ENCODE measurements at regions of chr17 and their contacts with region 1.

Region 1: DNA sequence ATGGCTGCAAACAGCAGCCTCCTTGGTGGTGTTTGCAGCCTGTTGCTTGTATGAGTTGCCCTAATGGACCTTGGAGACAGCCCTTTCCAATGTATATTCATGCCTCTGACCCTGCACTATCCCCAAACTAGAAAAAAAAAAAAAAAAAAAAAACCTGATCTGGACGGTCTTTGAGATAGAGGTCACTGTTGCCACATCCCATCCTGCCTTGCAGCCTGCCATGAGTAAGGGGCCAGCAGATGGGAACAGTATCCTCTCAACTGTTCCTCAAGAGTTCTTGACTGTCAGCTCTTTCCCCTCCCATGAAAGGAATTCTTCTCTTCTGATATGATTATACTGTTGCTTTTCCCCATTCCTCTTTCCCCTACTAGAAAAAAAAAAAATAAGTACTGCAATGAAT is 152.4 kb downstream of the SSH2 start:
- DNase-seq: no peak
- ATAC-seq: no peak
- H3K4me3 ChIP-seq: no peak overlapping the region
- H3K4me3 Mint-ChIP-seq: no peak overlapping the region
- H3K27ac ChIP-seq: no peak overlapping the region
- H3K27ac Mint-ChIP-seq: no peak overlapping the region
- H3K4me1 ChIP-seq: peaks cover 7% of the 10 kb centered on the region
- H3K4me1 Mint-ChIP-seq: peaks cover 7% of the 10 kb centered on the region
- H3K27me3 ChIP-seq: no peaks in the 10 kb centered on the region
- H3K27me3 Mint-ChIP-seq: no peaks in the 10 kb centered on the region
- CTCF ChIP-seq: no peak

Region 2: GRCh38 chr17:29579866-29580771 is 197.5 kb before region 1 on chr17:
- CTCF ChIA-PET with region 1: interaction called, 21 read pairs
- POLR2A ChIA-PET with region 1: interaction called, 3 read pairs
- intact Hi-C with region 1: loop called (anchors 1 kb)
- DNase-seq: peak; percentile 81 to 95 (median 92)
- ATAC-seq: peak; percentile 99
- H3K4me3 ChIP-seq: no peak overlapping the region
- H3K4me3 Mint-ChIP-seq: no peak overlapping the region
- H3K27ac ChIP-seq: no peak overlapping the region
- H3K27ac Mint-ChIP-seq: peak overlapping the region; percentile 34
- H3K4me1 ChIP-seq: peaks cover 13% of the 10 kb centered on the region
- H3K4me1 Mint-ChIP-seq: peaks cover 11% of the 10 kb centered on the region
- H3K27me3 ChIP-seq: no peaks in the 10 kb centered on the region
- H3K27me3 Mint-ChIP-seq: no peaks in the 10 kb centered on the region
- CTCF ChIP-seq: peak; percentile 80

Region 3: GRCh38 chr17:29640413-29640812 is 137.2 kb before region 1 on chr17:
- CTCF ChIA-PET with region 1: interaction called, 23 read pairs
- POLR2A ChIA-PET with region 1: interaction called, 4 read pairs
- intact Hi-C with region 1: loop called (anchors 1 kb)
- DNase-seq: no peak
- ATAC-seq: no peak
- H3K4me3 ChIP-seq: no peak overlapping the region
- H3K4me3 Mint-ChIP-seq: no peak overlapping the region
- H3K27ac ChIP-seq: no peak overlapping the region
- H3K27ac Mint-ChIP-seq: peak overlapping the region; percentile 61
- H3K4me1 ChIP-seq: no peaks in the 10 kb centered on the region
- H3K4me1 Mint-ChIP-seq: peaks cover 17% of the 10 kb centered on the region
- H3K27me3 ChIP-seq: no peaks in the 10 kb centered on the region
- H3K27me3 Mint-ChIP-seq: no peaks in the 10 kb centered on the region
- CTCF ChIP-seq: no peak

Region 4: DNA sequence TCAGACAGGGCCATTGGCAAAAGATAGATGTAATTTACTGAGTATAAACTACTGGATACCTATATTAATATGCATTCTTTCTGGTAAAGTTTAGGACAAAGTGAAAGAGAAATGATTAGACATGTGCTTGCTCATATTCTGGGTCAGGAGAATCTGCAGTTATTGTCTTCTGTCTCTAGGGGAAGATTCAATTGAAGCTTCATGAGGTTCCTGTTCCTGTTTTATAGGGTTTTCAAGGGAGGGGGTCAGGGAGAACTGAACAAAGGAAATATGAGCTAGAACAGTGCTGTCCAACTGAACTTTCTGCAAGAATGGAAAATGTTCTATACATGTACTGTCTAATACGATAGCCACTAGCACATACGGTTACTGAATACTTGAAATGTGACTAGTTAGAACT is 95.6 kb before region 1 on chr17:
- CTCF ChIA-PET with region 1: interaction called, 20 read pairs
- POLR2A ChIA-PET with region 1: no interaction called
- intact Hi-C with region 1: loop called (anchors 5 kb)
- DNase-seq: peak in 2 of 9 experiments; percentile 12 to 47
- ATAC-seq: peak; percentile 49
- H3K4me3 ChIP-seq: no peak overlapping the region
- H3K4me3 Mint-ChIP-seq: no peak overlapping the region
- H3K27ac ChIP-seq: peak overlapping the region in 1 of 2 experiments; percentile 9
- H3K27ac Mint-ChIP-seq: peak overlapping the region; percentile 39
- H3K4me1 ChIP-seq: peaks cover 4% of the 10 kb centered on the region
- H3K4me1 Mint-ChIP-seq: peaks cover 27% of the 10 kb centered on the region
- H3K27me3 ChIP-seq: no peaks in the 10 kb centered on the region
- H3K27me3 Mint-ChIP-seq: no peaks in the 10 kb centered on the region
- CTCF ChIP-seq: no peak

Region 5: DNA sequence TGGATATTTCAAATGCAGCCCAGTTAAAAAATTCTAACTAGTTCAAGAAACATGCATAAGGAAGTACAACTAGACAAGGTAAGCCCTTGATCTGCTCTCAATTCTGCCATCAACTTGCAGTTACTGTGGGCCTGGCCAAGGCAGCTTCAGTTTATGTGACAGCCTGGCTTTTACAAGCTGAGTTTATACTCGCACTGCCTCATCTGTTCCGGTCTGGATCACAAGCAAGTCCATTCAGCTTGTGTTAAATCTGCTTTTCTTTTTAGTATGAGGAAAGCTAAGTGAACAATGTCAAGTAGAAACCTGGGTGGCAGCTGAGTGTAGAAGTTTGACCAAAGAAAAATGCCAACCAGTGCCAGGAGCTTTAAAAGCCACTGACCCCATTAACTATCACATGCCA is 78.4 kb before region 1 on chr17:
- CTCF ChIA-PET with region 1: interaction called, 19 read pairs
- POLR2A ChIA-PET with region 1: interaction called, 4 read pairs
- intact Hi-C with region 1: loop called in 1 of 2 experiments (anchors 5 kb)
- DNase-seq: no peak
- ATAC-seq: no peak
- H3K4me3 ChIP-seq: no peak overlapping the region
- H3K4me3 Mint-ChIP-seq: no peak overlapping the region
- H3K27ac ChIP-seq: peak overlapping the region in 1 of 2 experiments; percentile 7
- H3K27ac Mint-ChIP-seq: peak overlapping the region; percentile 84
- H3K4me1 ChIP-seq: peaks cover 7% of the 10 kb centered on the region
- H3K4me1 Mint-ChIP-seq: peaks cover 31% of the 10 kb centered on the region
- H3K27me3 ChIP-seq: no peaks in the 10 kb centered on the region
- H3K27me3 Mint-ChIP-seq: no peaks in the 10 kb centered on the region
- CTCF ChIP-seq: no peak

Region 6: DNA sequence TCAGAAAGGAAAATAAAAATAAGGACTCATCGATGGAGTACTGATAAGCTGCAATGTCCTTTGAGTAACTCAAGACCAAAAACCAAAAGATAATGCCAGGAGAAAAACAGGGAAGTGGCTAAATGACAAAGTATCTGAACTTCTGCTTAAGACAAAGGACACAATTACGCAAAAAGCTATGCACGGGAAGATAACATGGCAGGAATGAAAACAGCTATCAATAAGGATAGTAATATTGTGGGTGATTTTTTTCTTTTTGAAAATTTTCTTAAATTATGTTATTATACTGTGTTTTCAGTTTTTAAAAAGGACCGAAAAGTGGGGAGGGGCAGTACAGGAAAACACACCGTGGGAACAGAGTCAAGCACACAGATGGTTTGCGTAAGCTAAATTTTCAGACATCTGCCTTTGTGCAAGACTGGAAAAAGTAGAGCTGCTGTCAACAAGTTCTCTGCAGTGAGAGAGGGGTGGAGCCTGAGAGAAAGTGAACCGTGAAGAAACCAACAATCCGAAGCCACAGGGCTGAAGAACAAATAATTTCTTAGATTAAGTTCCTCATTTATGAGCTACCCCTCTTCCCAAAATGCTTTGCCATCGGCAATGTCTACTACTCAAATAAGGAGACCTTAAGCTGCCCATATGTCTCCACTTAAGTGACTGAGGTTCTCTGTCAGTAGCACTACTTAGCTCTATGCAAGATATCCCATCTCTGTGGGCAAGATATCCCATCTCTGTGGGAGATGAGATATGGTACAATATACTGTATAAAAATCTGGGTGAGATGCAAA is 55.1 kb before region 1 on chr17:
- CTCF ChIA-PET with region 1: interaction called, 9 read pairs
- POLR2A ChIA-PET with region 1: no interaction called
- intact Hi-C with region 1: loop called in 1 of 2 experiments (anchors 2 kb)
- DNase-seq: peak; percentile 16 to 85 (median 53)
- ATAC-seq: peak; percentile 77
- H3K4me3 ChIP-seq: peak overlapping the region; percentile 10 to 30
- H3K4me3 Mint-ChIP-seq: peak overlapping the region; percentile 73
- H3K27ac ChIP-seq: peak overlapping the region; percentile 46 to 73
- H3K27ac Mint-ChIP-seq: peak overlapping the region; percentile 94
- H3K4me1 ChIP-seq: peaks cover 70% of the 10 kb centered on the region
- H3K4me1 Mint-ChIP-seq: peaks cover 84% of the 10 kb centered on the region
- H3K27me3 ChIP-seq: no peaks in the 10 kb centered on the region
- H3K27me3 Mint-ChIP-seq: no peaks in the 10 kb centered on the region
- CTCF ChIP-seq: no peak

Region 7: DNA sequence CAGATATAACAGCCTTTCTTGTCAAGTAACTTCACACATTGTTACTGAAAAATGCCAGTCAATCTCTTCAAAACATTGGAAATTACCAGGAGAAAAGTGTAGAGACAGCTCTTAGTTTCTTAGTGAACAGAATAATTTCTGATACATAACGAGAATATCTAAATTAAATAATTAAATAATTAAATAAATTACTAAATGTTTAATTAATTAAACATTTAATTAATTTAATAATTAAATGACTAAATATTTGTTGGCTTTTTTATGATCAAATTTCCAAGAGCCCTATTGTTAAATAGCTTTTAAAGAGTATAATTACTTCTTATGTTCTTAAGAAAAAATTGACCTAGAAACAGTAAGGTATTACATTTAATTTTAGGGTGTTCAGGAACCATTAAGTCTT is 22.8 kb after region 1 on chr17:
- CTCF ChIA-PET with region 1: no interaction called
- POLR2A ChIA-PET with region 1: no interaction called
- intact Hi-C with region 1: no loop called
- DNase-seq: no peak
- ATAC-seq: no peak
- H3K4me3 ChIP-seq: no peak overlapping the region
- H3K4me3 Mint-ChIP-seq: no peak overlapping the region
- H3K27ac ChIP-seq: no peak overlapping the region
- H3K27ac Mint-ChIP-seq: no peak overlapping the region
- H3K4me1 ChIP-seq: no peaks in the 10 kb centered on the region
- H3K4me1 Mint-ChIP-seq: no peaks in the 10 kb centered on the region
- H3K27me3 ChIP-seq: no peaks in the 10 kb centered on the region
- H3K27me3 Mint-ChIP-seq: no peaks in the 10 kb centered on the region
- CTCF ChIP-seq: no peak